Activated CD4-positive, alpha-beta memory T cell treated with anti-CD3 and anti-CD28 coated beads, Interleukin-2, amount 10 ng/mL, durations not matched to agents 7 days and 5 days (primary cell): ENCODE measurements at regions of chr11 and their contacts with region 1.

Region 1: DNA sequence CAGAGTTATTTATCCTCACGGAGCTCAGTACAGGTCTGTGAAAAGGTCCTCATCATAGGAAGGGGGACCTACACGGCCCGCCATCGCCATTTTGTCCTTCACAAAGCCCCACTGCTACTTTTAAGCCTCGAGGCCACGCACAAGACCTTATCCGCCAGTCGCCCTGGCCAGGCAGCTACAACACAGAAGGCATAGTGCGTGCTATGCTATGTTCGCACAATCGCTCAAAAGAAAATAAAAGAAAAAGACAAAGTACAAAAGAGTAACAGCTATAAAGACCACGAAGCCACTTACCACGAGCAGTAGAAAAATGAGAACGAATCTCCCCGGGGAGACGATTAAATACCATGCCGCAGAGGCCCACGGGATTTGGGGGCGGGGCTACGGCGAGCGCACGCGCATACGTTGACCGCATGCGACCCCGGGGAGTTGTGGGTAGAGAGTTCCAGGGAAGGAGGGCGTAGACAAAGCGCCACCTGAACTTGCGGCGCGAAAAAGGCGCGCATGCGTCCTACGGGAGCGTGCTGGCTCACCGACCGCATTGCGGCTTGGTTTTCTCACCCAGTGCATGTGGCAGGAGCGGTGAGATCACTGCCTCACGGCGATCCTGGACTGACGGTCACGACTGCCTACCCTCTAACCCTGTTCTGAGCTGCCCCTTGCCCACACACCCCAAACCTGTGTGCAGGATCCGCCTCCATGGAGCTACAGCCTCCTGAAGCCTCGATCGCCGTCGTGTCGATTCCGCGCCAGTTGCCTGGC is 16.4 kb upstream of the WDR74 start:
- DNase-seq: peak; percentile 99
- H3K4me3 Mint-ChIP-seq: peak overlapping the region; percentile 97
- H3K27ac Mint-ChIP-seq: peak overlapping the region; percentile 96
- H3K4me1 Mint-ChIP-seq: peaks cover 75% of the 10 kb centered on the region
- H3K27me3 Mint-ChIP-seq: no peaks in the 10 kb centered on the region

Region 2: DNA sequence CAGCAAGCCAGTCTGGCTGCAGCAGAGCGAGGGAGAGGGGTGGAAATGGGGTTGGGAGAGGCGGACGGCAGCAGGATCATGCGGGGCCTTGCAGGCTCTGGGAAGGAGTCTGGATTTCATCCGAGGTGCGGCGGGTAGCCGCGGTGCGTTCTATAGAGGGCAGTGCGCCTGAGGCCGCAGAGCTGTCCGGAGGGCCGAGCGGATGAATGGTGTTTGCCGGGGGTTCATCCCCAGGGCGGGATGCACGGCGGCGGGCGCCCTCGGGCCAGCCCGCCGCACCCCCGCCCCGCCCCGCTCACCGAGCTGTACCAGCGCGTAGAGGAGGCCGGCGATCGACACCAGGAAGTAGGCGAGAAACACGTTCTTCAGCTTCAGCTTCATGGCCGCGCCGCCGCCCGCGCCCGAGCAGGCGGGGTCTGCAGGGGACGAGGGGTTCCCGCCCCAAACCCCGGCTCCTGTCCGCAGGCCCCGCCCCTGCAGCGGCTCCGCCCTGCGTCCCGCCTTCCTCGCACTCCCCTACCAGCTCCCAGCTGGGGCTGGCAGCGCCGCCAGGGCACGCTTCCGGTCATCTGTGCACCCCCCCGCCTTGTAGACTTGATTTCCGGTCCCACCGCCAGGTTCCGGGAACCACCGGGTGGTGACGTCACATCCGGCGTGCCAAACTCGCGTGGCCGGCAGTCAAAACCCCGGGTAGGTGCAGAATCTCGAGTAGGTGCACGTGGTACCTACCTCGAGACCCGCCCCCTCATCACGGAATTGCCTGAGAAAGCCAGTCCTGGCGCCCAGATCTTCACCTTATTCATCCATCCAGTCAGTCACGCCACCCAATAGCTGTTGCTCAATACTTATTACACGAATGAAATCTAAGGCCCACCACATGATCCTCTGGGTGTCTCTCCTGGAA is 233.9 kb before region 1 on chr11 and contains the start of gene B3GAT3:
- CTCF ChIA-PET with region 1: no interaction called
- POLR2A ChIA-PET with region 1: interaction called, 10 read pairs
- DNase-seq: peak; percentile 97
- H3K4me3 Mint-ChIP-seq: peak within 1 kb of the TSS; percentile 87
- H3K27ac Mint-ChIP-seq: peak within 1 kb of the TSS; percentile 98
- H3K4me1 Mint-ChIP-seq: peaks cover 29% of the 10 kb centered on the region
- H3K27me3 Mint-ChIP-seq: no peaks in the 10 kb centered on the region
- total RNA-seq, gene B3GAT3: 58.9 to 67.1 TPM

Region 3: GRCh38 chr11:62726915-62727763 is 128.6 kb before region 1 on chr11 and contains the start of gene HNRNPUL2:
- CTCF ChIA-PET with region 1: interaction called, 6 read pairs
- POLR2A ChIA-PET with region 1: interaction called, 108 read pairs
- DNase-seq: peak; percentile 99
- H3K4me3 Mint-ChIP-seq: peak within 1 kb of the TSS; percentile 87
- H3K27ac Mint-ChIP-seq: peak within 1 kb of the TSS; percentile 97
- H3K4me1 Mint-ChIP-seq: peaks cover 50% of the 10 kb centered on the region
- H3K27me3 Mint-ChIP-seq: no peaks in the 10 kb centered on the region
- total RNA-seq, gene HNRNPUL2: 65.1 to 65.3 TPM

Region 4: GRCh38 chr11:62787005-62787759 is 68.6 kb before region 1 on chr11 and contains the start of gene TMEM179B:
- CTCF ChIA-PET with region 1: interaction called, 53 read pairs
- POLR2A ChIA-PET with region 1: interaction called, 116 read pairs
- DNase-seq: peak; percentile 98
- H3K4me3 Mint-ChIP-seq: peak within 1 kb of the TSS; percentile 95
- H3K27ac Mint-ChIP-seq: peak within 1 kb of the TSS; percentile 97
- H3K4me1 Mint-ChIP-seq: peaks cover 47% of the 10 kb centered on the region
- H3K27me3 Mint-ChIP-seq: no peaks in the 10 kb centered on the region
- total RNA-seq, gene TMEM179B: 46.9 to 48.2 TPM

Region 5: GRCh38 chr11:62875698-62876478 is 20.1 kb after region 1 on chr11:
- CTCF ChIA-PET with region 1: interaction called, 44 read pairs
- POLR2A ChIA-PET with region 1: interaction called, 234 read pairs
- DNase-seq: no peak
- H3K4me3 Mint-ChIP-seq: no peak overlapping the region
- H3K27ac Mint-ChIP-seq: no peak overlapping the region
- H3K4me1 Mint-ChIP-seq: peaks cover 19% of the 10 kb centered on the region
- H3K27me3 Mint-ChIP-seq: no peaks in the 10 kb centered on the region